Lower lobe of right lung (tissue), 2 donors: ENCODE measurements at regions of chr17 and their contacts with region 1.

Region 1: GRCh38 chr17:49574323-49574781 is 1.3 kb upstream of the NXPH3 start:
- DNase-seq: peak; percentile 46
- ATAC-seq: no peak
- H3K4me3 ChIP-seq: no peak overlapping the region
- H3K27ac ChIP-seq: no peak overlapping the region
- H3K4me1 ChIP-seq: peaks cover 42% of the 10 kb centered on the region
- H3K27me3 ChIP-seq: peaks cover 8% of the 10 kb centered on the region
- CTCF ChIP-seq: no peak

Region 2: DNA sequence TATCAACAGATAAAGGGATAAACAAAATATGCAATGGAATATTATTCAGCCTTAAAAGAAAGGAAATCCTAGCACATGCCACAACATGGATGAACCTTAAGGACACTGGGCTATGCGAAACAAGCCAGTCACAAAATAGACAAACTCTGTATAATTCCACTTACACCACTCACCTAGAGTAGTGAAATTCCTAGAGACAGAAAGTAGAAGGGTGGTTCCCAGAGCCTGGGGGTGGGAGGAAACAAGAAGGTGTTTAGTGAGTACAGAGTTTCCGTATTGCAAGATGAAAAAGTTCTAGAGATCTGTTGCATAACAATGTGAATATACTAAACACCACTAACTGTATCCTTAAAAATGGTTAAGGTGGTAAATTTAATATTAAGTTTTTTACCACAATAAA is 93.5 kb after region 1 on chr17:
- intact Hi-C with region 1: no loop called
- DNase-seq: no peak
- ATAC-seq: peak; percentile 79 to 89
- H3K4me3 ChIP-seq: no peak overlapping the region
- H3K27ac ChIP-seq: no peak overlapping the region
- H3K4me1 ChIP-seq: peaks cover 68% of the 10 kb centered on the region
- H3K27me3 ChIP-seq: no peaks in the 10 kb centered on the region
- CTCF ChIP-seq: no peak

Region 3: DNA sequence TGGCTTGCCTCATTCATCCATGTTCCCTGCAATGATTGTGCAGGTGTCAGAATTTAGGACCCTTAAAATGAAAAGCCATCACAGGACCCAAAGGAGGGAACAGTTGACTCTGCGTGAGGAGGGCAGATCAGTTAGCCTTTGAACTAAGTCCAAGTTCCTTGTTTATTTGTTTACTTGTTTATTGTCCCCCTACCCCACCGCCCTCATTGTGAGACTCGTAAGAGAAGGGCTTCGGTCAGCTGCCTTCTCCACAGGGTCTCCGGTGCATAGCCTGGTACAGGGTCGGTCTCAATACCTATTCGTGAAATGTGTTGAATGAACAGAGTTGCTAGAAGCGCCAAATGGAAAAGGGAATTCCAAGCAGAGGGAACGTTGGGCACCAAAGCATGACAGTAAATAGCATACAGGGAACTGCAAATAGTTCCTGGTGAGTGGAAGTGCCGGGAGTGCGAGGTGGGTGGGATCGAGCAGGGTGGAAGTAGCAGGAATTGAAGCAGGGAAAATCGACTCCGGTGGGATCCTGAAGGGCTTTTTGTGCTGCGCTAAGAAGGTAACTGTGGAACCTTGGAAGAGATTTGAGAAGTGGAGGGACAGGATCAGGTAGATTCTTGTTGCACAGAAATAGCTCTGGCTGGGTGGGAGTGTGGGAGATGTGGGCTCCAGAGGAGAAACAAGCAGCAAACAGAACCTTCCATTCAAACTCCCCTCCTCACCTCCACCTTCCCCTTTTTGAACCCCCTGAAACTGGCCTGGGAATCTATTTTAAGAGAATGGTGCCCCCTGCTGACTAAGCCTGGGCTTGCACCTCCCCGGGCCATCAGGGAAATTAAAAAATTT is 120.7 kb after region 1 on chr17:
- intact Hi-C with region 1: loop called (anchors 5 kb)
- DNase-seq: no peak
- ATAC-seq: peak; percentile 77 to 81
- H3K4me3 ChIP-seq: no peak overlapping the region
- H3K27ac ChIP-seq: no peak overlapping the region
- H3K4me1 ChIP-seq: peaks cover 16% of the 10 kb centered on the region
- H3K27me3 ChIP-seq: no peaks in the 10 kb centered on the region
- CTCF ChIP-seq: peak; percentile 93